Activated B cell treated with CpG ODN at 0.5 μM for 24 hours (primary cell): ENCODE measurements at regions of chr10 and their contacts with region 1.

Region 1: GRCh38 chr10:22316285-22317120 is at the start of gene COMMD3:
- DNase-seq: peak; percentile 86
- ATAC-seq: peak; percentile 65
- H3K4me3 Mint-ChIP-seq: peak within 1 kb of the TSS; percentile 97
- H3K27ac Mint-ChIP-seq: peak within 1 kb of the TSS; percentile 98
- H3K4me1 Mint-ChIP-seq: peaks cover 40% of the 10 kb centered on the region
- H3K27me3 Mint-ChIP-seq: no peaks in the 10 kb centered on the region
- CTCF ChIP-seq: no peak
- total RNA-seq, gene COMMD3: 68.2 and 72.8 TPM in 2 replicates

Region 2: DNA sequence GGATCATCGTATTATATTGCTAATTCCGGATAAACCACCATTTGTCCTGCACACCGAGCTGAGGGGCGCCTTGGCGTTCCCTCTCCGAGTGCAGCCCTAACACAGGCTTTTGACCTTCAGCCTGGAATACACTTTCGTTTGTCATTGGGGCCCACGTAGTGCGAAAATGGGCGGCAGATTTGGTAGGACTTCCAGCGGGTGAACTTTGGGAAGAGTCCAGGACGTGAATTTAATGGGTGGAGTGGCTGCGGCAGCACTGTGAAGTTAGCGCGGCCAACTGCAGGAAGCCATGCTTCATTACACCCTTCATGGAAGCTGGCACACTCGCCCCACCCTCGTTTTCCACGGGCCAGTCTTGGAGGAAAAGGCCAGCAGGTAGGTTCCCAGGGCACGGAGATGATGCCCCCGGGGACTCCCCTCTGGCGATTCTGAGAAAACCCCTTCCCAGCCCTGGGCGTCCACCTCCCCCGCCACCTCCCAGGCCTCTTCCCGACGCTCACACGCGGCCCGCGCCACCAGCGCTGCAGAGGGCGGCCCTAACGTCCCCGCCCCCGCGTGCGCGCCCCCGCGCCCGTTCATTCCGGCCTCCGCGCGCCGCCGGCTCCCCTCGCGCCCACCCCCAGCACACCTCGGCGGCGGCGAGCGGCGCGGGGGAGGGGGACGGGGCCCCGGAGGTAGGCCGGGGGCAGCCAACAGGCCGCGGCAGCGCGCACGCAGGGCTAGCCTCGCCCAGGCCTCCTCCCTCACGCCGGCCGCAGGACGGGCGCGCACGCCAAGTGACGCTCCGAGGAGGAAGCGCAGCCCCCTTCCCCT is 782.8 kb before region 1 on chr10 and contains the start of gene MLLT10:
- CTCF ChIA-PET with region 1: no interaction called
- POLR2A ChIA-PET with region 1: interaction called, 4 read pairs
- intact Hi-C with region 1: loop called (anchors 1 kb)
- DNase-seq: peak; percentile 94
- ATAC-seq: peak; percentile 88
- H3K4me3 Mint-ChIP-seq: peak within 1 kb of the TSS; percentile 90
- H3K27ac Mint-ChIP-seq: peak within 1 kb of the TSS; percentile 92
- H3K4me1 Mint-ChIP-seq: peaks cover 18% of the 10 kb centered on the region
- H3K27me3 Mint-ChIP-seq: peaks cover 2% of the 10 kb centered on the region
- CTCF ChIP-seq: no peak
- total RNA-seq, gene MLLT10: 40.6 and 48.7 TPM in 2 replicates

Region 3: DNA sequence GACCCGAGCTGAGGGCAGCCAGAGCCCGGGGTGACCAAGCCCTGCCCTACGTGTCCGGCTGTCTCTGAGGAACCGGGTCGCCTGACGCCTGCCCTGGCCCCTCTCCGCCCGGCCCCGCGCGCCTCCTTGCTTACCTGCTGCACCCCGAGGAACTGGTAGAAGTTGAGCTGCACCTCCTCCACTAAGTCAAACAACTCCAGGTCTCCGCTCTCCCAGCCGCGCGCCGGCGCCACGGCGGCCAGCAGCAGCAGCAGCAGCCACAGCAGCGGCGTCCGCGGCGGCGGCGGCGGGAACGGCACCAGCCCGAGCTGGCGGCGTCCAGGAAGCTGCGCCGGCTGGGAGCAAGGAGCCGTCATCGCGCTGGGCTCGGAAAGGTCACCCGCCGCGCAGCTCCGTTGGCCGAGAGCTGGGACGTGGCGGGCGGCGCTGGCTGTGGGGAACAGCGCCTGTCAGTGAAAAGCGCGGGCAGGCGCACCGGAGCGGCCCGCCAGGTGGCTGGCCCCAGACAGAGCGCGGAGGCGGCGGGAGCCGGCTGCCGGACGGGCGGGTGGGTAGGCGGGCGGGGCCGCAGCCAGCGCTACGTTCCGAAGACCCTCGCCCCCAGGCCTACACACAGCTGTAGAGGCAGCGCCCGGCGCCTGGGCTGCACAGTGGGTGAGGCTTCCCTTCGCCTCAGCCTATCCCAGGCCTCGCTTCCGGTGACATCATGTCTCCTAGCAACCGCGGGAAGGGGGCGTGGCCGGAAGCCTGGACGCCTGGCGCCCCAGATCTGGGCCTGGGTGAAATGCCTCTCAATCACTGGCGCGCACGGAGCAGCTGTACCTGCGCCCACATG is 313.2 kb before region 1 on chr10 and contains the start of gene DNAJC1:
- CTCF ChIA-PET with region 1: no interaction called
- POLR2A ChIA-PET with region 1: interaction called, 15 read pairs
- intact Hi-C with region 1: loop called (anchors 1 kb)
- DNase-seq: peak; percentile 98
- ATAC-seq: peak; percentile 92
- H3K4me3 Mint-ChIP-seq: peak within 1 kb of the TSS; percentile 87
- H3K27ac Mint-ChIP-seq: peak within 1 kb of the TSS; percentile 91
- H3K4me1 Mint-ChIP-seq: peaks cover 41% of the 10 kb centered on the region
- H3K27me3 Mint-ChIP-seq: no peaks in the 10 kb centered on the region
- CTCF ChIP-seq: no peak
- total RNA-seq, gene DNAJC1: 9.2 and 10.9 TPM in 2 replicates

Region 4: DNA sequence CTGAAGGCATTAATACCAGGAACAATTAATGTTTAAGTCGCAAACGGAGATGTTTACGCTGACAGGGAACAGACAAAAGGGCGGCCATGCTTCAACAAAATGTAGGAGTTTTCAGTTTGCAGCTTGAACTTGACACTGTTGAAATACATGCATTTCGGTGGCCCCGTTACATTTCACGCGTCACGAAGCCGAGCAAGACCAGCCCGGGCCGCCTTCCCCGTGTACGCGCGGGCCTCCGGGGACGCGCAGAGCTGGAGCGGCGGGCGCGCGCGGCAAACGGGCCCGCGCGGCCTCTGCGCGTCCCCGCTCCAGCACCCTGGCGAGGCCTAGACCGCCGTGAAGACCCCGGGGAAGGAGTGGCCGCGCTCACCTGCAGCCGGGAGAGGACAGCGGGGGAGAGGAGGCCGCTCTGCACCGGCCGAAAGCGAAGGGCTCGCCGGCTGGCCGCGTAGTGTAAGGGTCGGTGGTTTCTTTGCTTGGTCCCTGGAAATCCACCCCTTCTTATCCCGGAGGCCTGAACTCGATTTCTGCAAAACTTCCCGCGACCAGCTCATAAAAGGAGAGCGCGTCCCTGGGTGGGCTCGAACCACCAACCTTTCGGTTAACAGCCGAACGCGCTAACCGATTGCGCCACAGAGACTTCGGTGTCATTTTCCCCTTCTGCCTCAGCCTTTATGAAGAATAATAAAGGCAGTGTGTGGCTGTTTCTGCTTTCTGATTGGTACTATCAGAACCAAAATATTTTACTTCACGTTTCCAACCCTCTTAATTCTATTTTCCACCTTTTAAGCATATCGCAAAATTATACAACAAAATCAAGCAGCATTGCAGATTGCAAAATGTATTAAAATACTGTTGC is 87.3 kb before region 1 on chr10:
- CTCF ChIA-PET with region 1: interaction called, 3 read pairs
- POLR2A ChIA-PET with region 1: interaction called, 86 read pairs
- intact Hi-C with region 1: loop called (anchors 1 kb)
- DNase-seq: peak; percentile 81
- ATAC-seq: peak; percentile 79
- H3K4me3 Mint-ChIP-seq: peak overlapping the region; percentile 88
- H3K27ac Mint-ChIP-seq: peak overlapping the region; percentile 96
- H3K4me1 Mint-ChIP-seq: peaks cover 15% of the 10 kb centered on the region
- H3K27me3 Mint-ChIP-seq: peaks cover 7% of the 10 kb centered on the region
- CTCF ChIP-seq: no peak

Region 5: GRCh38 chr10:22580711-22581110 is 264.2 kb after region 1 on chr10:
- CTCF ChIA-PET with region 1: no interaction called
- POLR2A ChIA-PET with region 1: interaction called, 13 read pairs
- intact Hi-C with region 1: no loop called
- DNase-seq: no peak
- ATAC-seq: no peak
- H3K4me3 Mint-ChIP-seq: no peak overlapping the region
- H3K27ac Mint-ChIP-seq: no peak overlapping the region
- H3K4me1 Mint-ChIP-seq: peaks cover 3% of the 10 kb centered on the region
- H3K27me3 Mint-ChIP-seq: no peaks in the 10 kb centered on the region
- CTCF ChIP-seq: no peak

Region 6: DNA sequence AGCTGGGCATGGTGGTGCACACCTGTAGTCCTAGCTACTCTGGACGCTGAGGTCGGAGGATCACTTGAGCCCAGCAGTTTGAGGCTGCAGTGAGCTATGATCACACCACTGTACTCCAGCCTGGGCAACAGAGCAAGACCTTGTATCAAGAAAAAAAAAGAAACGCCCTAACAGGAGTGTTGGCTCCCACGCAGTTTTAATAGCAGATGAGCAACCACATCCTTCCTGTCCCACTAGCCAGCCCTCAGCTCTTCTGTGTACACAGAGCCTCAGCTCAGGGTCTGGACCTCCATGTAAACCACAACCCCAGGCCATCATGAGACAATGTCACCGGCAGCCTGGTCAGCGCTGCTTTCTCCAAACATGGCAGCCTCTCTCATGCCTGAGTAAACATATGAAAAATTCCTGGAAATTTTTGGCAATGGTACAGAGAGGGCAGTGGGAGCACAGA is 289.7 kb after region 1 on chr10:
- CTCF ChIA-PET with region 1: no interaction called
- POLR2A ChIA-PET with region 1: interaction called, 8 read pairs
- intact Hi-C with region 1: loop called (anchors 5 kb)
- DNase-seq: no peak
- ATAC-seq: peak; percentile 75
- H3K4me3 Mint-ChIP-seq: peak overlapping the region; percentile 68
- H3K27ac Mint-ChIP-seq: peak overlapping the region; percentile 94
- H3K4me1 Mint-ChIP-seq: peaks cover 93% of the 10 kb centered on the region
- H3K27me3 Mint-ChIP-seq: no peaks in the 10 kb centered on the region
- CTCF ChIP-seq: no peak

Region 7: DNA sequence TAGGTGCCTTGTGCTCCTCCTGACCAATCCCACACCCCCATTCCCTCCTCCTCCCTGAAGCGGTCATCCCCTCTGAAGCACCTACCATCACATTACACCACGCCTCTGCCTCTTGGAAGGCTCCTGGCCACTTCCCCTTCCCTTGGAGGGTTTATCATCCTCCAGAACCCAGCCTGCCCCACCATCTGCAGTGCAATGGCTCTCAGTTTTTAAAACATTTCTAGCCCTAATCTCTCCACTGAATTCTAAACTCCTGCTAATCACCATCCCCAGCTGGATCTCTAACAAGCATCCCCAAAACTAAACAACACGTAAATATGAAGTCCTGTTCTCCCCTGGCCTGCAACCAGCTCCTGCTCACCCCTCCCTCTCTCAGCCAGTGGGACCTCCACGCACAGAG is 327.3 kb after region 1 on chr10:
- CTCF ChIA-PET with region 1: no interaction called
- POLR2A ChIA-PET with region 1: no interaction called
- intact Hi-C with region 1: no loop called
- DNase-seq: no peak
- ATAC-seq: no peak
- H3K4me3 Mint-ChIP-seq: no peak overlapping the region
- H3K27ac Mint-ChIP-seq: peak overlapping the region; percentile 57
- H3K4me1 Mint-ChIP-seq: peaks cover 69% of the 10 kb centered on the region
- H3K27me3 Mint-ChIP-seq: no peaks in the 10 kb centered on the region
- CTCF ChIP-seq: no peak

Region 8: GRCh38 chr10:23095404-23095965 is 779.0 kb after region 1 on chr10 and contains the start of gene MSRB2:
- CTCF ChIA-PET with region 1: no interaction called
- POLR2A ChIA-PET with region 1: no interaction called
- intact Hi-C with region 1: loop called (anchors 10 kb)
- DNase-seq: peak; percentile 47
- ATAC-seq: peak; percentile 81
- H3K4me3 Mint-ChIP-seq: peak within 1 kb of the TSS; percentile 89
- H3K27ac Mint-ChIP-seq: peak within 1 kb of the TSS; percentile 77
- H3K4me1 Mint-ChIP-seq: peaks cover 17% of the 10 kb centered on the region
- H3K27me3 Mint-ChIP-seq: no peaks in the 10 kb centered on the region
- CTCF ChIP-seq: no peak
- total RNA-seq, gene MSRB2: 4.1 and 4.6 TPM in 2 replicates